ENCODE measurements at regions of chr1 and their contacts with region 1.

Region 1: GRCh38 chr1:147204080-147204479 is 21.1 kb downstream of the FMO5 start:
- DNase-seq: peak; percentile 47
- H3K4me3 ChIP-seq: peak overlapping the region; percentile 2
- H3K27ac ChIP-seq: peak overlapping the region; percentile 40
- H3K4me1 ChIP-seq: peaks cover 20% of the 10 kb centered on the region
- CTCF ChIP-seq: no peak

Region 2: DNA sequence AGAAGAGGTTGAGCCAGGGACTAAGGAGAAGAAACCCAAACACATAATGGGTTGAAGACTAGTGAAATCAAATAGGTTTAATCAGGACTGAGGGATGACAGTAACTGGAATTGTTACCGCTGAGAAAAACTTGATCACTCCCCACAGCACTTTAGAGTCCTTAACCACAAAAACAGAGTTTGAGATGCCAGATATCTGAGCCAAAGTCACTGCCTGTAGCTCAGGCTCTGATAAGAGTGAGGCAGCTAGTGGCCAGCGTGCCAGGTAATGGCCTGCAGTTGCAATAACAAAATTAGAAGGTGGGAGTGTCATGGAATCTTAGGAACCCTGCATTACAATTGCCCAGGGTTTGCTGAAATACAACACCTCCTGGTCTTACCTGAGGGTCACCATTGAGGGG is 79.8 kb before region 1 on chr1:
- CTCF ChIA-PET with region 1: no interaction called
- POLR2A ChIA-PET with region 1: no interaction called
- intact Hi-C with region 1: no loop called
- DNase-seq: no peak
- H3K4me3 ChIP-seq: no peak overlapping the region
- H3K27ac ChIP-seq: no peak overlapping the region
- H3K4me1 ChIP-seq: no peaks in the 10 kb centered on the region
- CTCF ChIP-seq: no peak

Region 3: DNA sequence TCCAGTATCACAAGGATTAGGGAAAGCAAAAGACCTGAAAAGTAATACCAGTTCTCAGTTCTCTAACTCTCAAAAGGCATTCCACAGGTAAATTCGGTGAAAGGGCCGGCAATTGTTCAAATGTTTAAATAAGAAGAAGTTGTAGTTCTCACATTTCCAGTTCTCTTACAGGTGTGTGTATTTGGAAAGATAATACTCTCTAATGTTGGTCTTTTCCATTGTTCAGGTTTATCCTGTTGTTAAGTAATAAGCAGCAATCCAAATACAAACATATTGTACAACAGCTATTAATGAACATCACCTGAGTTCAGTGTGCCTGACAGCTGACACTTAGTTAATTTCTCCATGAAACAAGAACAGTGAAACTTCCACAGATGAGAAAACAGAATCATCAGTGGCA is 18.6 kb before region 1 on chr1:
- CTCF ChIA-PET with region 1: no interaction called
- POLR2A ChIA-PET with region 1: no interaction called
- intact Hi-C with region 1: loop called (anchors 1 kb)
- DNase-seq: no peak
- H3K4me3 ChIP-seq: no peak overlapping the region
- H3K27ac ChIP-seq: no peak overlapping the region
- H3K4me1 ChIP-seq: no peaks in the 10 kb centered on the region
- CTCF ChIP-seq: no peak